GM13977 (cell line): ENCODE measurements at regions of chr2 and their contacts with region 1.

Region 1: GRCh38 chr2:66434679-66435548 is at the start of gene MEIS1:
- DNase-seq: peak; percentile 79
- CTCF ChIP-seq: no peak

Region 2: DNA sequence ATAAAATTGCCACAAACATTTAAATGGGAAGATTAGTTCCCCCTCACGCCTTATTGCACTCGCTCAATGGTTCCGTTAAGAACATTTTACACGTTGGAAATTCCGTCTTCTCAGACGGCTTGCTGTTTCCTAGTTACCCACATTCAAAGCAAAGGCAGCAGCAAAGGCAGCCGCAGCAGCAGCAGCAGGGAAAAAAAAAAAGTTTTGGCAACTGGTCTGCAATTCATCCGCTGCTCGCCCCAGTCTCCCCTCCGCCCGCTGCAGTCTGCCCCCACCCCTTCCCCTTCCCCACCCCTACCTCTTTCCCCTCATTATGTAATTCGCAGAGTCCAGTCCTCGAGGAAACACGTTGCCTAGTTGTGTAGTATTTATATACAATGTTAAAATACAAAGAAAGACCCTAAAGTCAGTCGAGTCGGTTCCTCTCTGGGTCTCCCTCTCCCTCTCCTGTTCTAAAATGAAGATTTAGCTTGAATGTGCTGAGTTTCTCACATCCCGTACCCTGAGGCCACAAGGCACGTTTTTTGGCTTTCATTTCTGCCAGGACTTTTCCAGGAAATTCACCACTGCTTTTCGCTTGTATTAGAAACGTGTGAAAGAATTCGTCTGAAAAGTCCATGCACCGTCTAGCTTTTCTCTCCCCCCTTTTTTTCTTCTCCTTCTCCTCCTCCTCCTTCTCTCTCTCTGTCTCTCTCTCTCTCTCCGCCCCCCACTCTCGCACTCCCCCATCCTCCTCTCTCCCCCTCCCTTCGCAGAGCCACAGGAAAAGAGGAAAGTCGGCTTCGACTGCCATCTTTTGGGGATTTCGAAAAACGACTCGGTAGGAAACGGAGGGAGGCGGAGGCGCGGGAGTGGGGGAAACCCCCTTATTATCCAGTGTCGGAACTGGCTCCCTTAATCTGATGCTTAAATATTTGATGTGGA is 140.0 kb after region 1 on chr2:
- in situ Hi-C with region 1: loop called (anchors 25 kb)
- DNase-seq: peak; percentile 39
- CTCF ChIP-seq: peak; percentile 19

Region 3: DNA sequence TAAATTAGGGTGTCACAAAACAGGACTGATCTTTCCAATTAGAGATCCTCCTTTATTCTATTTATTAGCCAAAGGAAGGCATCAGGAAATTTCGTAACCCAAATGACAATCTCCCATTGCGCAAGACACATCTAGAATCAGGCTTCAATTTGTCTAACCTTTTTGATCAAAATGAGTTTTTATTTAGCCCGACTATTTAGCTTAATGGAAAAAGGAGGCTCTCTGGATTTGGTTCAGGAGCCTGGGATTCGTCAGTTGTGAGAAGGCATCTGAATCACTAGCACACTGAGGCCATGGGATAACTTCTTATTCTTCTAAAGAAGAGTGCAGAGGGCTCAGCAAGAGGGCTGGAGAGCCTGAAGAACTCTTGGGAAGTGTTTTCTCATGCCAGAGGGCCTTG is 630.1 kb after region 1 on chr2:
- in situ Hi-C with region 1: no loop called
- DNase-seq: no peak
- CTCF ChIP-seq: no peak